ENCODE measurements at regions of chr10 and their contacts with region 1.

Region 1: GRCh38 chr10:126904819-126905686 is at the start of gene DOCK1:
- DNase-seq: peak; percentile 73
- ATAC-seq: peak; percentile 64
- H3K4me3 Mint-ChIP-seq: peak within 1 kb of the TSS; percentile 90
- H3K27ac Mint-ChIP-seq: peak within 1 kb of the TSS; percentile 97
- H3K4me1 Mint-ChIP-seq: peaks cover 42% of the 10 kb centered on the region
- H3K27me3 Mint-ChIP-seq: no peaks in the 10 kb centered on the region
- CTCF ChIP-seq: no peak
- total RNA-seq, gene DOCK1: 52.1 to 58.4 TPM (median 55.8 TPM) in 3 replicates

Region 2: DNA sequence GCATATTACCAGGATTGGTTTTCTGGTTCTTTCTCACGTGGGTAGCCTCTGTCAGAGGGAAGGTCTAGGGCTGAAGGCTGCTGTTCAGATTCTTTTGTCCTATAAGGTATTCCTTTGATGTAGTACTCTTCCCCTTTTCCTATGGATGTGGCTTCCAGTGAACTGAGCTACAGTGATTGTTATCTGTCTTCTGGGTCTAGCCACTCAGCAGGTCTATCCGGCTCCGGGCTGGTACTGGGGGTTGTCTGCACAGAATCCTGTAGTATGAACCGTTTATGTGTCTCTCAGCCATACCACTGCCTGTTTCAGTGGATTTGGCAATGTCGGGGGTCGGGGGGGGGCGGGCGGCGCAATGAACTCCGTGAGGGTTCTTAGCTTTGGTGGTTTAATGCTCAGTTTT is 150.1 kb before region 1 on chr10:
- CTCF ChIA-PET with region 1: no interaction called
- POLR2A ChIA-PET with region 1: interaction called, 10 read pairs
- DNase-seq: no peak
- ATAC-seq: no peak
- H3K4me3 Mint-ChIP-seq: no peak overlapping the region
- H3K27ac Mint-ChIP-seq: no peak overlapping the region
- H3K4me1 Mint-ChIP-seq: peaks cover 6% of the 10 kb centered on the region
- H3K27me3 Mint-ChIP-seq: no peaks in the 10 kb centered on the region
- CTCF ChIP-seq: no peak

Region 3: DNA sequence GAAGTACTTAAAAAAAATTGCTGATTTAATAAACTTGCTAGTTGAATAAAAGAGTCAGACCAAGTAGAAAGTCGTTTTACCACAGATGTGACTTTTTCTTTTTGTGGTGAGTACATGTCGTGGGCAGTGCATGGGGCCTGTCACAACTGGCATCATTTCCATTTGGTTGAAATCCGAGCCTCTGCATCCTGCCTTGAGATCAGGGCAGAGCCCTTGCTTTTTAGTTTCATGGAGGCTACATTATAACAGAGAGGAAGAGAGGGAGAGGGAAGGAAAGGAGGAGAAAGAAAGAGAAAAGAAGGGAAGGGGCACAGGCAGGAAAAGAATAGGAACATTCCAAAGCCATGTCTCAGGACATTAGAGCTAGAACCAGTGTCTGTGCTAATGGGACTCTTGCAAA is 311.7 kb after region 1 on chr10:
- CTCF ChIA-PET with region 1: no interaction called
- POLR2A ChIA-PET with region 1: no interaction called
- DNase-seq: no peak
- ATAC-seq: peak; percentile 63
- H3K4me3 Mint-ChIP-seq: peak overlapping the region; percentile 21; the same call in 1 of the 2 replicates
- H3K27ac Mint-ChIP-seq: peak overlapping the region; percentile 98
- H3K4me1 Mint-ChIP-seq: peaks cover 38% of the 10 kb centered on the region
- H3K27me3 Mint-ChIP-seq: no peaks in the 10 kb centered on the region
- CTCF ChIP-seq: no peak